ENCODE measurements at regions of chr4 and their contacts with region 1.

Region 1: GRCh38 chr4:52983563-52984303 is 121.6 kb downstream of the RASL11B start:
- DNase-seq: peak; percentile 49
- H3K4me3 ChIP-seq: no peak overlapping the region; a peak in 1 of 4 replicates
- H3K27ac ChIP-seq: peak overlapping the region in 1 of 2 experiments; percentile 80; a peak in 2 of 4 replicates
- H3K4me1 ChIP-seq: peaks cover 0 to 42% of the 10 kb centered on the region in 2 experiments; a peak in 2 of 4 replicates
- H3K27me3 ChIP-seq: no peaks in the 10 kb centered on the region
- CTCF ChIP-seq: peak; percentile 81
- EP300 ChIP-seq: no peak
- RAD21 ChIP-seq: peak; percentile 77

Region 2: GRCh38 chr4:52368895-52369294 is 614.8 kb before region 1 on chr4:
- CTCF ChIA-PET with region 1: interaction called, 76 read pairs
- POLR2A ChIA-PET with region 1: no interaction called
- DNase-seq: no peak
- H3K4me3 ChIP-seq: no peak overlapping the region
- H3K27ac ChIP-seq: no peak overlapping the region
- H3K4me1 ChIP-seq: peaks cover 0 to 12% of the 10 kb centered on the region in 2 experiments; a peak in 2 of 4 replicates
- H3K27me3 ChIP-seq: no peaks in the 10 kb centered on the region
- CTCF ChIP-seq: no peak
- EP300 ChIP-seq: no peak
- RAD21 ChIP-seq: no peak

Region 3: DNA sequence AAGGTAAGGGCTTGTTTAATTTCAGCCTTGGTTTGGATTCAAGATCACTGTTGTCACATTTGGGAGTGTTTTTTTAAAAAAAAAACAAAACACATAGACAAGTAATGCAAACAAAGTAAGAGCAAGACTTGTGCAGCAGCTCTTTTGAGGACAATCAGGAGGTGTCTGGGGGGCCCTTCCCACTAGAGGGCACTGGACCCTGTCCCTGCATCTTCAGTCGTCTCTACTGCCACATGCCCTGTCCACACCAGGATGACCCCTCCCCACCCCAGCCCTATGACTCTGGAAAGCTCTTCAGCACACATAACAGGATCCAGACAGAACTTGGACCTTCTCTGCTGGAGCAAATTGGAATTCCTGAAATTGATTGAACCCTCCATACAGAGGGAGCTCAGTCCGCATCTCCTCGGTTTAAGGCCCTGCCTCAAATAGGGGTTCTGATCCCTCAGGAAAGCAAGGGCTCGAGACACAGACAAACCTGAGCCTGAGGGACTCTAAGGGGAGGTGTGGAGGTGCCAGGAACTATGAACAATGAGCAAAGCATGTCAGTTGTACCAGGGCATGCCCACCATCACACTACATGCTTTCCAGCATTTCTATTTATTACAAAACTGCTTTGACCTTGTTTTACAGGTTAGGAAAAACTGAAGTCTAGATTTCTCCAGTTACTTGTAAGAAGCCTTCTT is 395.5 kb before region 1 on chr4:
- CTCF ChIA-PET with region 1: interaction called, 27 read pairs
- POLR2A ChIA-PET with region 1: no interaction called
- DNase-seq: peak; percentile 56
- H3K4me3 ChIP-seq: no peak overlapping the region
- H3K27ac ChIP-seq: no peak overlapping the region
- H3K4me1 ChIP-seq: no peaks in the 10 kb centered on the region
- H3K27me3 ChIP-seq: no peaks in the 10 kb centered on the region
- CTCF ChIP-seq: peak; percentile 54
- EP300 ChIP-seq: no peak
- RAD21 ChIP-seq: peak; percentile 60

Region 4: DNA sequence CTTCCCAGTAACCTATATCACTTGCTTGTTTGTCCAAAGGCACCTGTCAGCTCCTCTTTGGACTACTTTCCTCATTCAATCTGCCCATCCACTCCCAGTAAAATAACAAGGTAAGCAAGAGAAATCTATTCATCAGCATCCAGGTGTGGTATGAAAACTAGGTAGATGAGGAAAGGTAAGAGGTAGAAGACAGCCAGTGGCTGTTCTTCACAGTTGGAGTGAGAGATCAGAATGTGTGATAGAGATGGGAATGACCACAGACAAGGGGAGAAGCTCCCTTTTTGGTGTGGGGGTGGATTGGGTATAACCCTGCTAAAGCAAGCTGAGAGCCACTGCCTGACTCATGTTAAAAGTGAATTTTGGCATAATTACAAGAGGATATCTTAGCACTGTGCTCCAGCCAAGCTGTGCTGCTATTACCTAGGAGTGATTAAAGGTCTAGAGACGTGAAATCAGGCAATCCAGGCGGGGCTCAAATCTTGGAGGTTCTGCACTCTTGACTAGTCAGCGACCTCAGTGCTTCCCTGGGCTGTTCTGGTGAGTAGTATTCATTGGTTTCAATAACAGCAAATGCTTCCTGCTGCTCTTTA is 149.7 kb before region 1 on chr4:
- CTCF ChIA-PET with region 1: no interaction called
- POLR2A ChIA-PET with region 1: no interaction called
- DNase-seq: no peak
- H3K4me3 ChIP-seq: no peak overlapping the region
- H3K27ac ChIP-seq: no peak overlapping the region
- H3K4me1 ChIP-seq: peaks cover 0 to 18% of the 10 kb centered on the region in 2 experiments; a peak in 1 of 4 replicates
- H3K27me3 ChIP-seq: no peaks in the 10 kb centered on the region
- CTCF ChIP-seq: no peak
- EP300 ChIP-seq: no peak
- RAD21 ChIP-seq: no peak

Region 5: DNA sequence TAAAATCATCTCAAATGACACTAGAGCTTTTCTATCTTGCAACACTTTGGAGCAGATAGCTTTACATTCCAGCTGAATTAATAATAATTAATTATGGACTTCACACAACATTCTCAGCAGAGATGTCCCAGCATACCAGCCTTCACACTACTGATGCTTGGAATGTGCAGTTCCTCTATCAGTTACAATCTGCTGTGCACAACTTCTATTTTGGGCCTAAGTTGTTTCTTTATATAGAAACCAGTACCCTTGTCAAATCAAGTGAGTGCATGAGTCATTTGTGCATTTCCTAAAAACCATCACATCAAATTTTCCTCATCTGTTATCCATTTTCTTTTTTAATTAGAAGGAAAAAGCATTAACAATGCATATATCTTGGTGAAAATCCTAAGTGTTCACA is 130.4 kb before region 1 on chr4:
- CTCF ChIA-PET with region 1: interaction called, 11 read pairs
- POLR2A ChIA-PET with region 1: no interaction called
- DNase-seq: no peak
- H3K4me3 ChIP-seq: peak overlapping the region in 1 of 2 experiments; percentile 30; a peak in 2 of 4 replicates
- H3K27ac ChIP-seq: peak overlapping the region; percentile 41 to 73; a peak in 3 of 4 replicates
- H3K4me1 ChIP-seq: peaks cover 4 to 12% of the 10 kb centered on the region in 2 experiments; a peak in 3 of 4 replicates
- H3K27me3 ChIP-seq: no peaks in the 10 kb centered on the region
- CTCF ChIP-seq: no peak
- EP300 ChIP-seq: peak in 1 of 2 experiments; percentile 69; a peak in 1 of 4 replicates
- RAD21 ChIP-seq: no peak

Region 6: GRCh38 chr4:52911684-52912294 is 71.9 kb before region 1 on chr4:
- CTCF ChIA-PET with region 1: interaction called, 16 read pairs
- POLR2A ChIA-PET with region 1: no interaction called
- DNase-seq: peak; percentile 58
- H3K4me3 ChIP-seq: peak overlapping the region in 1 of 2 experiments; percentile 7; a peak in 1 of 4 replicates
- H3K27ac ChIP-seq: no peak overlapping the region
- H3K4me1 ChIP-seq: peaks cover 0 to 12% of the 10 kb centered on the region in 2 experiments; a peak in 2 of 4 replicates
- H3K27me3 ChIP-seq: no peaks in the 10 kb centered on the region
- CTCF ChIP-seq: peak; percentile 73
- EP300 ChIP-seq: no peak
- RAD21 ChIP-seq: peak; percentile 71

Region 7: DNA sequence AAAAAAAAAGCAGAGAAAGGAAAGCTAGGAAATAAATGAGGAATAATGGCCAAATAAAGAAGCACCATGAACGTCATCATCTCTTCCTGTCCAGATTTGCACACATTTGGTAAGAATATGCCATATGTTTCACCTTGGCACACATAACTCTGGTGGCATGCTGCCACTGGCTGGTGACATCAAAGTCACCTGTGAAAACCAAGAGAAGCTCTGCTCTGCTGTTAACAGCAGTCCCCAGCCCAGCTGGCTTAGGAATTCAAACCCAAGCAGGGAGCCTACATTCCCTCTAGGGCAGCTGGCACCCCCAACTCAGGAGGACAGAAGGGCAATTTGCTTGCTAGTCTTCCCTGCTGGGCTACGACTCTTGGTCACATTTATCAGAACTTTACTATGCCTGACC is 44.0 kb before region 1 on chr4:
- CTCF ChIA-PET with region 1: no interaction called
- POLR2A ChIA-PET with region 1: no interaction called
- DNase-seq: no peak
- H3K4me3 ChIP-seq: no peak overlapping the region
- H3K27ac ChIP-seq: no peak overlapping the region
- H3K4me1 ChIP-seq: peaks cover 0 to 7% of the 10 kb centered on the region in 2 experiments; a peak in 1 of 4 replicates
- H3K27me3 ChIP-seq: no peaks in the 10 kb centered on the region
- CTCF ChIP-seq: no peak
- EP300 ChIP-seq: no peak
- RAD21 ChIP-seq: no peak

Region 8: DNA sequence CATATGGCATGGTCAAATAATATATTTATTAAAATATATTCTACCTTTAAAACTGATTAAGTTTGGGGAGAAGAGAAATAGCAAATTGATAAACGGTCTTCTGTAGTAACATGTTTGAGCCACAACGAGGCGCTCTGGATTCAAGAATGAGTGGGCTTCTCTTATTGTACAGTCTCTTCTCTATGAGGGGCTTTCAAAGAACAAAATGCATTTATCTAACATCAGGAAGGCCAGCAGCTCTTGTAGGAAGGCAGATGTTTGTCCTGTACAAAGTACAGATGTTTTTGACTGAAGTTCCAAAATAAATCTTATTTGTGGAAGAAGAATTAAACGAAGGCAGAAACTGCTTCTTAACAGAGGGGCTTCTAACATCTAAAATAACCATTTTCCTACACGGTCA is 31.9 kb after region 1 on chr4:
- CTCF ChIA-PET with region 1: interaction called, 10 read pairs
- POLR2A ChIA-PET with region 1: no interaction called
- DNase-seq: peak; percentile 36
- H3K4me3 ChIP-seq: no peak overlapping the region; a peak in 1 of 4 replicates
- H3K27ac ChIP-seq: peak overlapping the region in 1 of 2 experiments; percentile 100; a peak in 2 of 4 replicates
- H3K4me1 ChIP-seq: peaks cover 51 to 56% of the 10 kb centered on the region in 2 experiments
- H3K27me3 ChIP-seq: no peaks in the 10 kb centered on the region
- CTCF ChIP-seq: peak; percentile 87
- EP300 ChIP-seq: peak in 1 of 2 experiments; percentile 90; a peak in 2 of 4 replicates
- RAD21 ChIP-seq: peak; percentile 99

Region 9: DNA sequence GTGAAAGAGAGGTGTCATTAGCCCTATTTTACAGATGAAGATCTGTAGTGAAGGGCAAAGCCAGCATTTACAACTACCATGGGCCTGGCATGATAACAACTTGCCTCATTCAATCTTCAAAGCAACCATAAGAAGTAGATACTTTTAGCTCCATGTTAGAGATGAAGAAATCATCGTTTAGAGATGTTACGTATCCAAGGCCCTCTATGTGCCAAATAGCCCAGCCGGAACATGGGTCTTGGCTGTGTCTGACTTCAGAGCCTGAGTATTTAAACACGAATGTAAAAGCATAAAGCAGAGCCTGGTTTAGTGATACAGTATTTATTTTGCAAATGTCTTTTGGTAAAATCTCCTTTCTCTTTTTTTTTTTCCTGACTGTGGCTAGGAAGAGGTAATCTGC is 75.5 kb after region 1 on chr4:
- CTCF ChIA-PET with region 1: no interaction called
- POLR2A ChIA-PET with region 1: no interaction called
- DNase-seq: no peak
- H3K4me3 ChIP-seq: no peak overlapping the region
- H3K27ac ChIP-seq: peak overlapping the region in 1 of 2 experiments; percentile 32; a peak in 2 of 4 replicates
- H3K4me1 ChIP-seq: peaks cover 0 to 27% of the 10 kb centered on the region in 2 experiments; a peak in 2 of 4 replicates
- H3K27me3 ChIP-seq: no peaks in the 10 kb centered on the region
- CTCF ChIP-seq: no peak
- EP300 ChIP-seq: no peak
- RAD21 ChIP-seq: no peak